Activated T-helper 2 cell treated with anti-CD3 and anti-CD28 coated beads, Interferon-gamma antibody, Interleukin-2, Interleukin-4, amounts not matched to agents 10 μg/mL and 5 μg/mL and 100 μg/mL, durations not matched to agents 14 hours and 24 hours and 36 hours (primary cell): ENCODE measurements at regions of chr5 and their contacts with region 1.

Region 1: DNA sequence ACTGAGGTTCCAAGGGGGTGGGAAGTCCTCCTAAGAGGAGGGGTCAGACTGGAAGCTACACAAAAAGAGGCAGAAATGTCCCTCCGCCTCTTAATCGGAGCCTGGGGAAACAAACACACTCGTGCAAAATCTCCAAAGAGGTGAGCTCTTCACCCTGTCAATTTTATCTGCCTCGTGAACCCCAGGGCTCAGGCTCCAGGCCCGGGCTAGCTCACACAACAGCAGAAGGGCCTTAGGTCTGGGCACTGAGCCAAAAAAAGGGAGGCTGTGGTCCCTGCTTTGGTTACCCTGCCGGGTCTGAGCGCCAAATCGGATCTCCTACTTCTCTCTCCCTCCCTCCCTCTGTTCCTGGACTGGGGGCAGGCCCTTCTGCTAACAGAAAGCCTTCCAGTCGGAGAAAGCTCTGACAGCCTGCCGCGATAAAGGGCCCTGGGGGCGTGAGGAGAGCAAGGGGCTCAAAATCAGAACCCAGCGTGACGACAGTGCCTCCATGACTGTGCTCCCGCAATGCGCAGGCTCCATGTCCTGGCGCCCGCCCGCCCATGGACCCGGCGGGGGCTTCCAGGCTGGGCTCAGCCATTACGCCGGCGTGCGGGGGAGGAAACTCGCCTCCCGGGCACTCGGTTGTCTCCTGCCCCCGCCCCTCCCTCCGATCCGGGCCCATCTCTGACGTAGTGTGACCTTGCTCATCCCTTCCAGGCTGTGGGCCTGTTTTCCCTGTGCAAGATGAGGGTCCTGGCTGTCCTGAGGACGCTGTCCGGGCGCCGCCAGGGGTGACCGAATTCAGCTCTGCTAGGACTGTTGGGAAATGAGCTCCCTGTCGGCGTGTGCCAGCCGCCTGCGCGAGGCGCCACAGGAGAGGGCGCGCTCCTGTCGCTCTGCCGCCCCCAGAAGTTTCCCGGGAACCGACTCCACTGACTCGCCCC is 865 bp upstream of the SLC22A4 start:
- DNase-seq: peak; percentile 53
- H3K4me3 Mint-ChIP-seq: peak overlapping the region; percentile 92
- H3K27ac Mint-ChIP-seq: peak overlapping the region; percentile 90
- H3K4me1 Mint-ChIP-seq: peaks cover 34% of the 10 kb centered on the region
- H3K27me3 Mint-ChIP-seq: no peaks in the 10 kb centered on the region

Region 2: DNA sequence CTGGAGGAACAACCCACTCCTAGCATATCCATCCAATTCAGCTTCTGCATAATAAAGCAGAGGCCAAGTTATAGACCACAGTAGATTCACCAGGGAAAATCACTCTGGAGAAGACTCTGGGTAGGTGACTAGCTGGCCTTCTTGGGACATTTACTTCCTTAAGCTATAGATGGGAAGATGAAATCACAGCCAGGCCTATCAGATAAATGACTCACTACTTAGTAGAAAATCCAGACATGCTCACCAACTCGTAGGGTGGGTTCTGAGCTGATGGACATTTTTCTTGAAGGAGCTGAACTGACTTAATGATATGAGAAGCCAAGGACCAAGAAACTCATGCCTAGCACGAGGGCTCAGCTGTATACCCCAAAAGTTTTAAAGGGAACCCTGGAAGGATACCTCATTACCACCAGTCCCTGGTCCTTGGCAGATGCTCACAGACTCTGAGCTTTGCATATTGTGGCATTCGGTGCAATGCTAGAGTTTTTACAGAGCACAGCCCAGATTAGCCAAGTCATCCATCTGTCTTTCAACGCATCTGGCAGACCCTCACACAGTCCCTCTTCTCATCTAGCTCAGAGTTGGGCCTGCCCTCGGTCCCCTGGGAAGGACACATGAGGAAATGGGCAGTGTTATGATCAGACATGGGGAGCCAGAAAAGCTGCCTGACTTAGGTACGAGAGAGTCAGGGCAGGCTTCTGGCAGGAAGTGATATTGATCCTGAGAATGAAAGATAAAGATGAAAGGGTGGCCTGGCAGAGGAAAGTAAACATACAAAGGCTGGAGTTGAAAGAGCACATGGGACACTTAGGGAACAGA is 296.9 kb before region 1 on chr5:
- intact Hi-C with region 1: no loop called
- DNase-seq: no peak
- H3K4me3 Mint-ChIP-seq: no peak overlapping the region
- H3K27ac Mint-ChIP-seq: no peak overlapping the region
- H3K4me1 Mint-ChIP-seq: peaks cover 33% of the 10 kb centered on the region
- H3K27me3 Mint-ChIP-seq: peaks cover 2% of the 10 kb centered on the region

Region 3: DNA sequence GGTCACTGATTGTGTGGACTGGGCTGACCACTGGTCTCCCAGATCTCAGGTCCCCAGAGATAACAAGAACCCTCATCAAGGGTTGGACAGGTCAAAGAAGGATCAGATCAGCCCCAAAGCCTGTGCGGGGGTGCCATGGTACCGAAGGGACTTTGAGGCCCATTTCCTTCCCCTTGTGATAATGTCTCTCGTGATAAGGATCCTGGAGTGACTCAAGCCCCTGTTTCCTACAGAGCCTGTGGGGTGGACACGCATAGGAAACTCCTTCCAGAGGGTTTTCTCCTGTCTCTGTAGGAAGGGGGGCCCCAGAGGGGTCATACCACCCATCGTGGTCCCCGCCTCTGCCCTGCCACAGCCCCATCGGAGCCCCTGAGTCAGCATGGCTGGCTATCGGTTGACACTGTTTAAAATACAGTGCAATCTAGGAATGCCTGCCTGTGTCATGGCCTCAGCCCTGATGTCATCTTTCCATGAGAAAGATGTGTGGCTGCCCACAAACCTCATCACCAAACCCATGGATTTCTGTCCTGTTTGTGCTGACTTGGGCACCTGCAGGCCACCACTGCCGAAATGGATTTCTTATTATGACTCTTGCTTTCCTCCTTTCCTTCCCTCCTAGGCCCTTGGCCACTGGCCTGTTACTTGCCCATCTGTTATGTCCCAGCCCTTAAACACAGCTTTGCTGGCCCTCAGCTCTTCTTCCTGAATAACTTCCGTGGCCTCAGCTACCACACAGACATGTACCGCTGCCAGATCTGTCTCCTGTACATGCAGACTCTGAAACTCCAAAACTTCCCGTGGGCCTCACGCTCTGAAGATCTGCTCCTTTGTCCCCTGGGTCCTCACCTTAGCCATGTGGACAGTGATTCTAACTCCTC is 222.6 kb before region 1 on chr5:
- intact Hi-C with region 1: loop called (anchors 2 kb)
- DNase-seq: no peak
- H3K4me3 Mint-ChIP-seq: peak overlapping the region; percentile 54
- H3K27ac Mint-ChIP-seq: peak overlapping the region; percentile 89
- H3K4me1 Mint-ChIP-seq: peaks cover 68% of the 10 kb centered on the region
- H3K27me3 Mint-ChIP-seq: no peaks in the 10 kb centered on the region

Region 4: DNA sequence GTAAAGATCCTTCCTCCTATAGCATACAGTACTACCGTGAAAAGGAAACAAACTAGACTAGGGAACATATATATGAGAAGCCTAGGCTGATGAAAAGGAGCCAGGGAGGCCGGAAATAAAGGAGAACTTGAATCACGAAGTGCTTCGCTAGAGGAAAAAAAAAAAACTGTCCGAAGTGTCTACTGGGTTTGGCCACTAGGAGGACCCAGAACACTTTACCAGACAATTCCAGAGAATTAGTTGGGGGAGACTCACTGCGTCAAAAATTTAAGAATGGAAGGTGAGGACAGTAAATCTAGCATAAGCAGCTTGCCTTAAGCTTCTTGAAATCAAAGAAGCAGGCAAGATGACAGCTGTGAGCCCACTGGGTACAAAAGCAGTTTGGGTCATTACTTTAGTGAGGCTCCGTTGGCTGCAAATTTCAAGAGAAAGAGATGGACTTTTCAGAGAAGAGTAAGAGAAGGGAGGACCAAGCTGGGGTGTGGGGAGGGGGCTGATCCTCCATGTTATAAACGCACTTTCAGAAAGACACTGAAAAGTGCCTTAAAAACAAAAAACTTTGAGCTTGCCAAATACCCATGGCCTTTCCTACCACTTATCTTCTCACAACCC is 113.1 kb before region 1 on chr5:
- intact Hi-C with region 1: loop called (anchors 5 kb)
- DNase-seq: no peak
- H3K4me3 Mint-ChIP-seq: peak overlapping the region; percentile 19
- H3K27ac Mint-ChIP-seq: peak overlapping the region; percentile 85
- H3K4me1 Mint-ChIP-seq: peaks cover 44% of the 10 kb centered on the region
- H3K27me3 Mint-ChIP-seq: no peaks in the 10 kb centered on the region

Region 5: DNA sequence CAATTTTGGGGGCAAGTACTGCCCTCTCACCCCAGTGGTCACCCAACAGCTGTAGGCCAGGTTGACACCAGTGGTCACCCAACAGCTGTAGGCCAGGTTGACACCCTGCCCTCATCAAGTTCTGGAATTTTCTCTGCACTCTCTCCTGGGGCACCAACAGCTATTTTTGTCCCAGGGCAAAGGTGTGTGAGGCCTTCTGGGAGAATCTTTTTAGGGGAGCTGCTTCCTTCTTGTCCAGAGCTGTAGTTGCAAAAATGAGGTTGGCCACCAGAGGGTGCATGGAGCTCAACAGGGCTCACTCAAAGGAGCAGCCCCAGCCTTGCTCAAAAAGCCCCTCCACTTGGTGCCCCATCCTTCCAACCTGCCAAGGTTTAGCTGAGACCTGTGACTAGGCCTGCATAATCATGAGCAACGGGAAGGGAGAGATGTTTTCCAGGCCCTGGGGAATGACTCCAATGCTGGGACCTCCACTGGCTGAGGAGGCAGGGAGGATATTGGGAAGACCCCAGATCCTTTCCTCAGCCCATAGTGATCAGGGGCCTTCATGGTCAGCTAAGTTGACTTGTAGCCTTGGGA is 55.1 kb before region 1 on chr5:
- intact Hi-C with region 1: loop called (anchors 5 kb)
- DNase-seq: peak; percentile 61
- H3K4me3 Mint-ChIP-seq: no peak overlapping the region
- H3K27ac Mint-ChIP-seq: no peak overlapping the region
- H3K4me1 Mint-ChIP-seq: peaks cover 9% of the 10 kb centered on the region
- H3K27me3 Mint-ChIP-seq: peaks cover 9% of the 10 kb centered on the region

Region 6: DNA sequence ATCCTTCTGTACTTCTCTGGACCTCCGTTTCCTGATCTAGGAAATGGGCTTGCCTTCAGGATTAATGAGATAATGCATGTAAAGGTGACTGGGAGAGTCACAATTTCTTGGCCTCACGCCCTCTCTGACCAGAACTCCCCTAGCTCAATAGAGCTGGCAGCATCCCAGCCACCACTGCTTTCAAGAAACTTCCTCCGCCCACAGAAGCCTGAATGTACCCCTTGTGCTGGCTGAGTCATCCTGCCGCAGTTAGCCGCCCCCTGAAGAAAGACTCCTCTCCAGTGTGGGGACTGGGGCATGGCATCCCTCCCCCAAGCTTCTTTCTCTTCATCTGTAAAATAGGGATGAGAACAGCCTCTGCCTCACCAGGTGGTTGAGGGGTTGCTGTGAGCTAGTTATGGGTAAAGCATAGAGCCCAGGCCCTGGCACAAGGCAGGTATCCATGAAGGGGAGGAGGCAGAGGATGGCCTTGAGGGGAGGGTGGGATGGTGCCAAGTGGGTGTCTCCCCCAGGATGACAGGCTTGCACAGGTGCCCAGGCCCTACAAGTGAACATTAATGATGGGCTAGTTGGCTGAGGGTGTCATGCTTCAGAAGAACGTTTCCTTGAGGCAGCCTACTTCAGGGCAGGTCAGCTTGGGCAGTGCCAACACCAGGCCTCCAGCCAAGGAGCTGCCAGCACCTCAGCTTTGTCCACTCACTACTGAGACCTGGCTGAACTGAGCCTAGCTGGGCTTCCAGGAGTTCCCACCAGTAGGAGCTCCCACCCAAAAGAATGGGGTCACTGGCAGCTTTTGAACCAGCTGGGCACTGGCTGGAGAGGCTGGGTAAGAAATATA is 32.4 kb before region 1 on chr5:
- intact Hi-C with region 1: loop called (anchors 2 kb)
- DNase-seq: no peak
- H3K4me3 Mint-ChIP-seq: peak overlapping the region; percentile 31
- H3K27ac Mint-ChIP-seq: peak overlapping the region; percentile 64
- H3K4me1 Mint-ChIP-seq: peaks cover 50% of the 10 kb centered on the region
- H3K27me3 Mint-ChIP-seq: peaks cover 10% of the 10 kb centered on the region

Region 7: DNA sequence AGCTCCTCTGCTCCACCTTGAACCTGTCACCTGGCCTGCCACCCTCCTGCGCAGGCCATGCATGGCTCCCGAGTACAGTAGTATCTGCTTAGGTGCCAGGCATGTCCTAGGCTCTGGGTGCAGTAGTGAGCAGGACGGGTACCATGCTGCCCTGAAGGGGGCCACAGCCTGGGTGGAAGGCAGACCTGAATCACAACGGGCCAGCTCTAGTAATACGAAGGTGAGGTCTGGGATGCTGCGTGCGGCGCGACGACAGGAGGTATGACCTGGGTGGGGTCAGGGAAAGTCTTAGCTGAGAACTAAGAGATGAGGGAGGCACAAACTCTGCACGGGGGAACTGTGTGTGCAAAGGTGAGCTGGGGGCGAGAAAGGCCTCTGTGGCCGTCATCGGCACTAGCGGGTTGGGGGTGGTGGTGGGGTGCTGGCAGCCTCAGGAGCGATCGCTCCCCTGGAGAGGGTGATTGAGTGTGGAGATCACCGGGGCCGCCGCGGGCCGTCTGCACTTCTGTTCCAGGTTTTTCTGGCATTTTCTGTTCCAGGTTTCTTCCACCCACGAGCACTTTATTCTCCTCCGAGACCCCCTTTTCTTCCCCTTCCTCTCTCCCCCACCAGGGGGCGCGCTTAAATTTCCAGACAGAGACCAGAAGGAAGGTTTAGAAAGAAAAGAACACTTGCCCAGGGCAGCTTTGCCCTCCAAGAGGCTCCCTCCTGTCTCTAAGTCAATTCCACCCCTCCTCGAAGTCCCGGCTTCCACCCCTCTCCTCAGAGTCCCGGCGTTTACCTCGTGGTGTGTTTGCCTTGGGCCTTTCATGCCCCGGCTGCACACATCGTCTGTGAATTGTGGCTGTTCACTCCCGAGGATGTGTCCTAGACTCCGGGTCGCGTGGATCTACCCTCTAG is 20.8 kb before region 1 on chr5:
- intact Hi-C with region 1: loop called (anchors 2 kb)
- DNase-seq: peak; percentile 52
- H3K4me3 Mint-ChIP-seq: no peak overlapping the region
- H3K27ac Mint-ChIP-seq: peak overlapping the region; percentile 6
- H3K4me1 Mint-ChIP-seq: peaks cover 3% of the 10 kb centered on the region
- H3K27me3 Mint-ChIP-seq: peaks cover 5% of the 10 kb centered on the region

Region 8: DNA sequence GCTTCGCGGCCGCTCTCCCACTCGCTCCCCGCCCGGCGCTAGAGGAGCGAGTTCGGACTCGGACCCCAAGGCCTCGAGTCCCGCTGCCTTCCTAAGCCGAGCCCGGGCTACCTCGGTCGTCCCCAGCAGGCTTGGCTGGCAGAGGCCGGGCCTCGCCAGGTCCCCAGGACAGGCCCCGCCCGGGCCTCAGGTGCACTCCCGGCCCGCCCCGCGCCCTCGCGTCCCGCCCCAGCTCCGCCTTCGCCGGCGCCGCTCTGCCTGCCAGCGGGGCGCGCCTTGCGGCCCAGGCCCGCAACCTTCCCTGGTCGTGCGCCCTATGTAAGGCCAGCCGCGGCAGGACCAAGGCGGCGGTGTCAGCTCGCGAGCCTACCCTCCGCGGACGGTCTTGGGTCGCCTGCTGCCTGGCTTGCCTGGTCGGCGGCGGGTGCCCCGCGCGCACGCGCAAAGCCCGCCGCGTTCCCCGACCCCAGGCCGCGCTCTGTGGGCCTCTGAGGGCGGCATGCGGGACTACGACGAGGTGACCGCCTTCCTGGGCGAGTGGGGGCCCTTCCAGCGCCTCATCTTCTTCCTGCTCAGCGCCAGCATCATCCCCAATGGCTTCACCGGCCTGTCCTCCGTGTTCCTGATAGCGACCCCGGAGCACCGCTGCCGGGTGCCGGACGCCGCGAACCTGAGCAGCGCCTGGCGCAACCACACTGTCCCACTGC is 76.3 kb after region 1 on chr5 and contains the start of gene SLC22A5:
- intact Hi-C with region 1: loop called (anchors 5 kb)
- DNase-seq: peak; percentile 63
- H3K4me3 Mint-ChIP-seq: peak within 1 kb of the TSS; percentile 78
- H3K27ac Mint-ChIP-seq: peak within 1 kb of the TSS; percentile 67
- H3K4me1 Mint-ChIP-seq: peaks cover 20% of the 10 kb centered on the region
- H3K27me3 Mint-ChIP-seq: no peaks in the 10 kb centered on the region
- total RNA-seq, gene SLC22A5: 4.8 and 5.1 TPM in 2 replicates

Region 9: GRCh38 chr5:132655821-132656773 is 362.8 kb after region 1 on chr5:
- intact Hi-C with region 1: no loop called
- DNase-seq: no peak
- H3K4me3 Mint-ChIP-seq: peak overlapping the region; percentile 67
- H3K27ac Mint-ChIP-seq: peak overlapping the region; percentile 65
- H3K4me1 Mint-ChIP-seq: peaks cover 52% of the 10 kb centered on the region
- H3K27me3 Mint-ChIP-seq: peaks cover 12% of the 10 kb centered on the region